ENCODE measurements at regions of chr1 and their contacts with region 1.

Region 1: GRCh38 chr1:210448297-210448892 is 119.7 kb downstream of the HHAT start:
- DNase-seq: no peak
- H3K4me3 ChIP-seq: no peak overlapping the region
- H3K27me3 ChIP-seq: no peaks in the 10 kb centered on the region
- CTCF ChIP-seq: peak; percentile 70

Region 2: GRCh38 chr1:210400043-210400840 is 48.2 kb before region 1 on chr1:
- CTCF ChIA-PET with region 1: interaction called, 14 read pairs
- POLR2A ChIA-PET with region 1: no interaction called
- DNase-seq: no peak
- H3K4me3 ChIP-seq: no peak overlapping the region
- H3K27me3 ChIP-seq: no peaks in the 10 kb centered on the region
- CTCF ChIP-seq: peak; percentile 92

Region 3: GRCh38 chr1:210407207-210407886 is 41.0 kb before region 1 on chr1:
- CTCF ChIA-PET with region 1: interaction called, 55 read pairs
- POLR2A ChIA-PET with region 1: no interaction called
- DNase-seq: no peak
- H3K4me3 ChIP-seq: no peak overlapping the region
- H3K27me3 ChIP-seq: no peaks in the 10 kb centered on the region; the same call in 1 of the 2 replicates
- CTCF ChIP-seq: peak; percentile 96

Region 4: GRCh38 chr1:210415846-210416448 is 32.4 kb before region 1 on chr1:
- CTCF ChIA-PET with region 1: interaction called, 12 read pairs
- POLR2A ChIA-PET with region 1: no interaction called
- DNase-seq: no peak
- H3K4me3 ChIP-seq: no peak overlapping the region
- H3K27me3 ChIP-seq: no peaks in the 10 kb centered on the region
- CTCF ChIP-seq: no peak

Measured in BJ (cell line).